ENCODE measurements at regions of chr13 and their contacts with region 1.

Region 1: GRCh38 chr13:74062933-74063332 is 71.3 kb downstream of the KLF12 start:
- DNase-seq: peak; percentile 66
- H3K4me3 ChIP-seq: peak overlapping the region; percentile 57
- H3K27ac ChIP-seq: peak overlapping the region; percentile 89
- H3K4me1 ChIP-seq: peaks cover 79% of the 10 kb centered on the region
- H3K27me3 ChIP-seq: no peaks in the 10 kb centered on the region
- CTCF ChIP-seq: no peak

Region 2: GRCh38 chr13:73924607-73925006 is 138.3 kb before region 1 on chr13:
- intact Hi-C with region 1: no loop called
- DNase-seq: no peak
- H3K4me3 ChIP-seq: no peak overlapping the region
- H3K27ac ChIP-seq: no peak overlapping the region
- H3K4me1 ChIP-seq: peaks cover 15% of the 10 kb centered on the region
- H3K27me3 ChIP-seq: no peaks in the 10 kb centered on the region
- CTCF ChIP-seq: no peak

Region 3: GRCh38 chr13:74133657-74134201 is 70.8 kb after region 1 on chr13:
- intact Hi-C with region 1: loop called (anchors 5 kb)
- DNase-seq: peak; percentile 88
- H3K4me3 ChIP-seq: peak overlapping the region; percentile 95
- H3K27ac ChIP-seq: peak overlapping the region; percentile 99
- H3K4me1 ChIP-seq: peaks cover 68% of the 10 kb centered on the region
- H3K27me3 ChIP-seq: no peaks in the 10 kb centered on the region
- CTCF ChIP-seq: no peak

Measured in left ventricle myocardium inferior (tissue), 1 donor.